PC-3 (cell line): ENCODE measurements at regions of chr10 and their contacts with region 1.

Region 1: GRCh38 chr10:103273032-103273441 is 3.9 kb upstream of the INA start:
- DNase-seq: peak; percentile 97
- ATAC-seq: peak; percentile 100
- H3K4me3 ChIP-seq: no peak overlapping the region
- H3K27ac ChIP-seq: peak overlapping the region; percentile 66
- H3K4me1 ChIP-seq: peaks cover 8% of the 10 kb centered on the region
- H3K27me3 ChIP-seq: no peaks in the 10 kb centered on the region
- CTCF ChIP-seq: no peak

Region 2: DNA sequence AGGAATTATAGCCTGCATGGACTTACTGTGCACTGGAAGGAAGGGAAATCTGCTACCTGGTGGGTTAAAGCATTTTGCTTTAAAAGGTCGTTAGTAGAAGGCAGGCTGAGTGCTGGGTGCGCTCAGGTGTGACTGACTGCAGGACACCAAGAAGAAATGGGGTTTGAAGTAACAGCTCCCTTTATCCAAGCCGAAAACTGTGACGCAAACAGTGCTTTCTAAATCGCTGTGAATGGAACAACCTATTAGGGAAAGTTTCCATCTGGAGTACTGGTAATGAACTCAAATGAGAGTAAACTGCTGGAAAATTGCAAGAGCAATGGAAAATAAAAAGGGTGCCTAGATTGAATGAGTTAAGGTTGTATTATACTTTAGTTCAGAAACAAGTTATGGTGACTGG is 259.6 kb before region 1 on chr10:
- CTCF ChIA-PET with region 1: no interaction called
- POLR2A ChIA-PET with region 1: no interaction called
- intact Hi-C with region 1: no loop called
- DNase-seq: no peak
- ATAC-seq: no peak
- H3K4me3 ChIP-seq: no peak overlapping the region
- H3K27ac ChIP-seq: no peak overlapping the region
- H3K4me1 ChIP-seq: no peaks in the 10 kb centered on the region
- H3K27me3 ChIP-seq: no peaks in the 10 kb centered on the region
- CTCF ChIP-seq: no peak

Region 3: DNA sequence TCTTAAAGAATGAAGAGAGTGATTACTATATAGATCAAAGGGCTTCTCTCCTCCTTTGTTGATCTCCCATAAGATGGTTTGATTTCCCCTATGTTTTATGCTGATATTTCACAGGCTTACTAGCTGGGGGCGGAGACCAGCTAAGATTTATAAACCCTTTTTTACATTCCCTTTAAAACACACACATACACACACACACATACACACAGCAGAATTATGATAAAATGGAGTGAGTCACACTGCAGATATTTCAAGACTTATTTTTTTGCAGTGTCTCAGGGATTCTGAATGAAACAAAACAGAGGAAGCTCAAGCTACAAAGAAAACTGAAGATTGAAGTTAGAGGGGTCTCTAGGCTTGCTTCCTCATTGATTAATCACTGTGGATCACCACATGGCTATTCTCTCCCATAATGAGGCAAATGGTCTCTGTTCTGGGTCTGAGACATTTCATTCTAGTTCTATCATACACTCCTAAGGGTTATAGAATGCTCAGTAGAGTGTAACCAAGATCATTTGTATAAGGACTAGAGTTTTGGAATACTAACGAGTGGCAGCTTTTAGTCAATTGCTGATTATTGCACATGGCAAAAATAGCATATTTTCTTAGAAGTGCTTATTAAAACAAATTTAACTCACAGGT is 22.5 kb after region 1 on chr10:
- CTCF ChIA-PET with region 1: interaction called, 12 read pairs
- POLR2A ChIA-PET with region 1: no interaction called
- intact Hi-C with region 1: no loop called
- DNase-seq: peak; percentile 63
- ATAC-seq: peak; percentile 86
- H3K4me3 ChIP-seq: no peak overlapping the region
- H3K27ac ChIP-seq: no peak overlapping the region
- H3K4me1 ChIP-seq: peaks cover 9% of the 10 kb centered on the region
- H3K27me3 ChIP-seq: no peaks in the 10 kb centered on the region
- CTCF ChIP-seq: no peak